Heart left ventricle (tissue), 16 donors: ENCODE measurements at regions of chr17 and their contacts with region 1.

Region 1: DNA sequence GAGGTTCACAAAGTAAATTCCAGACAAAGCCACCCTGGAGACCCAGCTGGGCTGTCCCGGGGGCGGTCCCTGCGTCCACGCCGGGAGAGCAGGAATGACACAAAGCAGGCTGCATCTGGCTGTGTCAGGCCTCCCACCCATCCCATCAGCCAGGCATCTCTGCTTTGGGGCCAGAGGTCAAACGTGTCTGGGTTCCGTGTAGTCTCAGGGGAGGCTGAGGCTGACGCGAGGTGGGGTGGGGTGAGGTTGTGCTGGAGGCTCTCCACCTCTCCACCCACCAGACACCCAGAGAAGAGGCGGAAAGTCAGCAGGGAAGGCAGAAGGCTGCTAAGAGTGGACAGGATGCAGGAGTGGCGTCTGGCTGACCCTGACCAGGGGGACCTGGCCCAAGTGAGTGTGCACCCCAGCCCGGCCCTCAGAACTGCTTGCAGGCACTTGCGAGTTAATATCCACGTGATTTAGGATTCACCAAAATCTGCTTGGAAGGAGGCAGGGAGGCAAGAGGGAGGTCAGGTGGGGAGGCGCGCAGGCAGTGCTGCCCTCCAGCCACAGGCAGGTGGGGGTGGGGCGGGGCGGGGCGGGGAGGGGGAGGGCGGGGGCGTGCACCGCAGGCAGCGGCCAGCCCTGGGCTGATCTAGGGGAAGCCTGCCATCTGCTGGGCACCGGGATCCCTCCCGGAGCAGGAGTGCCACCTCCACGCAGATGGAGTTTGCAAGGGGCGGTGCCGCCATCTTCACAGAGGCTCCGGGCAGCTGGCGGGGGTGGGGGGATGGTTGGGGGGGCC is 44.3 kb downstream of the TBC1D16 start:
- DNase-seq: peak; percentile 82 to 91 (median 88)
- ATAC-seq: peak; percentile 82 to 87 (median 86)
- H3K4me3 ChIP-seq: peak overlapping the region in 11 of 12 donors; percentile 14 to 57 (median 47)
- H3K27ac ChIP-seq: peak overlapping the region in 10 of 12 donors; percentile 55 to 83 (median 76)
- H3K4me1 ChIP-seq: peaks cover 0 to 60% (median 38%) of the 10 kb centered on the region in 12 donors
- H3K27me3 ChIP-seq: no peaks in the 10 kb centered on the region
- CTCF ChIP-seq: peak; percentile 46 to 76 (median 61)
- POLR2A ChIP-seq: no peak

Region 2: GRCh38 chr17:79741751-79742588 is 249.4 kb before region 1 on chr17:
- intact Hi-C with region 1: loop called in 7 of 10 experiments (anchors 2 to 10 kb)
- DNase-seq: peak; percentile 62 to 88 (median 69)
- ATAC-seq: peak in 3 of 4 donors; percentile 65 to 77 (median 70)
- H3K4me3 ChIP-seq: peak overlapping the region in 4 of 12 donors; percentile 21 to 32 (median 24)
- H3K27ac ChIP-seq: no peak overlapping the region
- H3K4me1 ChIP-seq: peaks cover 0 to 18% (median 7%) of the 10 kb centered on the region in 12 donors
- H3K27me3 ChIP-seq: peaks cover 16 to 71% (median 52%) of the 10 kb centered on the region in 9 donors
- CTCF ChIP-seq: peak; percentile 85 to 97 (median 93)
- POLR2A ChIP-seq: no peak

Region 3: DNA sequence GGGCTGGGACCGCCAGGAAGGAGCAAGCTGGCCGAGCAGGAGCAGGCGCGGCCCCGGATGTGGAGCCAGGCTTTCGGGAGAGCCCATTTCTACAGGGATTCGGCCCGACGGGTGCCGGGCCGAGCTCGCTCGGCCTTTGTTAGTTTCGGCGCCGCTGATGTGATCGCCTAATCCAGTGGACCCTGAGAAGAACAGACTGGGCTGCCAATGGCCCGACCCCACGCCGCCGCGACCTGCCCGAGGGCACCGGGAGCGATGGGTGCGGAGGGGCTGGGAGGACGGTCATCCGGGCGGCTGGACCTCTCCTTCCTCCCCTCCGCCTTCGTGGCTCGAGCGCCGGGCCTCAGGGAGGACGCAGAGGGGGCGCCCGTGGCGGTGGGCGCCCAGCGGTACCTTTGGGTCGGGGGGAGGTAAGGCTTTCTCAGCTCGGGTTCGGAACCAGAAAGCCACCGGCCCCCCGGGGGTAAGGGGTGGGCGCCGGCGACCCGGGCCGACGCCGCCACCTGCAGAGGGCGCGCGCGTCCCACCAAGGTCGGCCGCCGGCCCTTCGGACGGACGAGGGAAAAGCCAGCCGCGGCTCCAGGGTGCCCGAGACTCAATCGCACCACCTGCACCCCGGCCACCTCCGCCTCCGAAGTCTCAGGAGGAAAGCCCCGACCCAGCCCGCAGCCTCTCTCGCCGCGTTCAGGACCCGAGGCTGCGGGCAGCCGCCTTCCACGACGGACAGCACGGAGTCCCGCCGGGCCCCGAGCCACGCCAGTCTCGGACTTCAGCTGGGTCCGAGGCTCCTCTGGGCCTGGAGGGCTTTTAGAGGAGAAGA is 201.6 kb before region 1 on chr17:
- intact Hi-C with region 1: loop called in 6 of 10 experiments (anchors 5 to 10 kb)
- DNase-seq: peak in 3 of 5 donors; percentile 45 to 82 (median 68)
- ATAC-seq: peak in 3 of 4 donors; percentile 42 to 65 (median 47)
- H3K4me3 ChIP-seq: peak overlapping the region in 5 of 12 donors; percentile 7 to 28 (median 10)
- H3K27ac ChIP-seq: no peak overlapping the region
- H3K4me1 ChIP-seq: peaks cover 0 to 53% (median 30%) of the 10 kb centered on the region in 12 donors
- H3K27me3 ChIP-seq: peaks cover 41 to 87% (median 62%) of the 10 kb centered on the region in 9 donors
- CTCF ChIP-seq: peak; percentile 66 to 88 (median 79)
- POLR2A ChIP-seq: no peak

Region 4: GRCh38 chr17:79803997-79804855 is 187.1 kb before region 1 on chr17:
- intact Hi-C with region 1: loop called in 4 of 10 experiments (anchors 2 to 5 kb)
- DNase-seq: no peak
- ATAC-seq: no peak
- H3K4me3 ChIP-seq: peak overlapping the region in 2 of 12 donors; percentile 25 to 44
- H3K27ac ChIP-seq: no peak overlapping the region
- H3K4me1 ChIP-seq: peaks cover 0 to 55% (median 21%) of the 10 kb centered on the region in 12 donors
- H3K27me3 ChIP-seq: peaks cover 85 to 100% (median 97%) of the 10 kb centered on the region in 9 donors
- CTCF ChIP-seq: no peak
- POLR2A ChIP-seq: no peak

Region 5: DNA sequence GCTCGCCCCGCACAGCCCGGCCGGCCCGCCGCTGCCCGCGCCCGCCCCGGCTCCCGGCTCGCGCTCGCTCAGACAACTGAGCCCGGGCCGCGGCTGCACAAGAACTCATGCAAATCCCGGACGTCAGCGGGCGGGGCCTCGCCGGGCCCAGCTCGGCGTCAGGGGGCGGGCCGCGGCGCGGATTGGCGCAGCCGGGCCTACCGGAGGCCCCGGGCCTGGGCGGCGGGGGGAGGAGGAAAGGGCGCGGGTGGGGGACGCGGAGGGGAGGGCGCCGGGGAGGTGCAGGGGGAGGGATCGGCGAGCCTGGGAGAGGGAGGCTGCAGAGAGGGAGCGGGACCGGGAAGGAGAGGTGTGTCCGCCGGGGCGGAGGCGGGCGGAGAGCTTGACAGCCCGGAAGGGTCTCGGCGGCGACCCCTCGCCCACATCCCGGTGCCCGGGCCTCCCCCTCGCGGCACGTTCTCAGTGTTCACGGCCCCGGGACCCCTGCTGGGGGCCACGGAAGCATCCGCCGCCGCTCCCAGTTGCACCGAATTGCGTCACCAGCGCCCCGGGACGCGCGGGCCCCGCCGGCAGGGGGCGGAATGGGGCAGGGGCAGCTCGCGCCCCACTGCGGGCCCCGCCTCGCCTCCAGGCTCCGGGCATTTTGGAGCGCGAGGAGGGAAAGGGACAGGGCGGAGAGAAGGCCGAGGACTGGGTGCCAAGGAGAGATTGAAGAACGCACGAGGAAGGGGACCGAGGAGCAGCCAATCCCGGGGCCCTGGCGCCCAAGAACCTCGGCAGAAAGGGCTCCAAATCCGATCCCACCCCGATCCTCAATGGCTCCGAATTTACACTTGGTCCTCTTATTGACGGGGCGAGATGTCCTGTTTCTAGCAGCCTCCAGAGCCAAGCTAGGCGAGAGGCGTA is 151.7 kb before region 1 on chr17 and contains the start of gene CBX4:
- intact Hi-C with region 1: loop called in 2 of 10 experiments (anchors 2 to 5 kb)
- DNase-seq: peak; percentile 96 to 98 (median 97)
- ATAC-seq: peak; percentile 79 to 84 (median 82)
- H3K4me3 ChIP-seq: peak within 1 kb of the TSS; percentile 53 to 99 (median 82)
- H3K27ac ChIP-seq: peak within 1 kb of the TSS; percentile 71 to 97 (median 94)
- H3K4me1 ChIP-seq: peaks cover 0 to 81% (median 64%) of the 10 kb centered on the region in 12 donors
- H3K27me3 ChIP-seq: peaks cover 27 to 48% (median 38%) of the 10 kb centered on the region in 9 donors
- CTCF ChIP-seq: peak; percentile 37 to 79 (median 66)
- POLR2A ChIP-seq: peak in 1 of 2 donors; percentile 85
- total RNA-seq, gene CBX4: 16.7 to 41.1 (median 26.9) TPM

Region 6: GRCh38 chr17:79850571-79851461 is 140.5 kb before region 1 on chr17:
- intact Hi-C with region 1: loop called in 2 of 10 experiments (anchors 5 to 10 kb)
- DNase-seq: peak in 1 of 5 donors; percentile 20
- ATAC-seq: no peak
- H3K4me3 ChIP-seq: no peak overlapping the region
- H3K27ac ChIP-seq: no peak overlapping the region
- H3K4me1 ChIP-seq: peaks cover 0 to 15% (median under 1%) of the 10 kb centered on the region in 12 donors
- H3K27me3 ChIP-seq: peaks cover 0 to 12% (median 0%) of the 10 kb centered on the region in 9 donors
- CTCF ChIP-seq: no peak
- POLR2A ChIP-seq: no peak

Region 7: GRCh38 chr17:79905832-79906231 is 85.5 kb before region 1 on chr17:
- intact Hi-C with region 1: no loop called
- DNase-seq: no peak
- ATAC-seq: no peak
- H3K4me3 ChIP-seq: no peak overlapping the region
- H3K27ac ChIP-seq: no peak overlapping the region
- H3K4me1 ChIP-seq: no peaks in the 10 kb centered on the region
- H3K27me3 ChIP-seq: peaks cover 0 to 46% (median 5%) of the 10 kb centered on the region in 9 donors
- CTCF ChIP-seq: no peak
- POLR2A ChIP-seq: no peak

Region 8: GRCh38 chr17:79942591-79943346 is 48.6 kb before region 1 on chr17:
- intact Hi-C with region 1: no loop called
- DNase-seq: peak in 3 of 5 donors; percentile 23 to 62 (median 37)
- ATAC-seq: peak in 1 of 4 donors; percentile 84
- H3K4me3 ChIP-seq: no peak overlapping the region
- H3K27ac ChIP-seq: no peak overlapping the region
- H3K4me1 ChIP-seq: peaks cover 0 to 9% (median 0%) of the 10 kb centered on the region in 12 donors
- H3K27me3 ChIP-seq: no peaks in the 10 kb centered on the region
- CTCF ChIP-seq: no peak
- POLR2A ChIP-seq: no peak